Naive thymus-derived CD4-positive, alpha-beta T cell (primary cell): ENCODE measurements at regions of chr1 and their contacts with region 1.

Region 1: GRCh38 chr1:173714759-173715537 is at the start of gene KLHL20:
- DNase-seq: peak; percentile 60 to 92 (median 89)
- ATAC-seq: peak; percentile 98
- H3K4me3 ChIP-seq: peak within 1 kb of the TSS; percentile 77
- H3K4me3 Mint-ChIP-seq: peak within 1 kb of the TSS; percentile 90 to 100 (median 96)
- H3K27ac ChIP-seq: peak within 1 kb of the TSS; percentile 78
- H3K27ac Mint-ChIP-seq: peak within 1 kb of the TSS; percentile 89 to 99 (median 94)
- H3K4me1 ChIP-seq: peaks cover 11 to 18% of the 10 kb centered on the region in 2 donors
- H3K4me1 Mint-ChIP-seq: peaks cover 14 to 48% (median 35%) of the 10 kb centered on the region in 7 donors
- H3K27me3 ChIP-seq: no peaks in the 10 kb centered on the region
- H3K27me3 Mint-ChIP-seq: peaks cover 14 to 32% (median 19%) of the 10 kb centered on the region in 5 donors
- total RNA-seq, gene KLHL20: 28.3 to 40.9 (median 32.8) TPM

Region 2: DNA sequence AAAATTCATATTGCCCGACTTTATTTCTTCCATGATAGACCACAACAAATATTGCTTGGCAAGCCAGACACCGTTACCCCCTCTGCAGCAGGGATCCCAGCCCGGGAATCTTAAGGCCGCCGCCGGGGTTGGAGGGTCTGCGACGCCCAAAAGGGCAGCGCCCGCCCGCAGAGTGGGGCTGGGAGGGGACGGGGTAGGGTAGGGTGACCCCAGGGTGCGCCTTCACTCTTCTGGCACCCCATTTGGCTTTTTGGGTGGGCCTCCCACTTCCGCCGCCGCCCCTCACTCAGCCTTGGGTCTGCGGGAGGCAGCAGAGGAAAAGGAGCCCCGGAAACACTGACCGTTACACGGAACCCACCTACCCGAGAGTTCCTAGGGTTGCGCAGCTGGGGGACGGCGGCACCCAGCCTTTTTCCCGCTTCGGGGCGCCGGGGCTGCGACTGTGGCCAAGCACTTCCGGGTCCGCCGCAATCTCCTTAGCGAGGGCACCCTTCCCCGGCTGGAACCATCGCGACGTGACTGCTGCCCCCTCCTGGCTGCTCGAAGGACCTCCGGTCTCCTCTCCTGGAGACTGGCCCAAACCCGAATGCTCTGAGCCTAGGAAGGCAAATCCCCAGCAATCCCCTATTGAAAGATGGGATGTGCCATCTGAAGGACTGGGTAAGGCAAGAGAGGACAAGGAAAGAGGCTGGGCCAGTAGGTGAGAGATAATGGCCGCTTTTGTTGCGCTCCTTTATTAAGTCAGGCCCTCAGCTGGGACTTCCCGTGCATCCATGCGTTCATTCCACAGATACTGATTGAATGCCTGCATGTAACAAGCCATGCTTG is 1271.1 kb before region 1 on chr1 and contains the start of gene PIGC:
- CTCF ChIA-PET with region 1: no interaction called
- POLR2A ChIA-PET with region 1: no interaction called
- intact Hi-C with region 1: loop called in 1 of 2 experiments (anchors 10 kb)
- DNase-seq: peak; percentile 78 to 89 (median 87)
- ATAC-seq: peak; percentile 100
- H3K4me3 ChIP-seq: peak within 1 kb of the TSS; percentile 72
- H3K4me3 Mint-ChIP-seq: peak within 1 kb of the TSS; percentile 87 to 98 (median 94)
- H3K27ac ChIP-seq: peak within 1 kb of the TSS; percentile 83
- H3K27ac Mint-ChIP-seq: peak within 1 kb of the TSS; percentile 91 to 97 (median 93)
- H3K4me1 ChIP-seq: peaks cover 15 to 25% of the 10 kb centered on the region in 2 donors
- H3K4me1 Mint-ChIP-seq: peaks cover 27 to 53% (median 47%) of the 10 kb centered on the region in 7 donors
- H3K27me3 ChIP-seq: no peaks in the 10 kb centered on the region
- H3K27me3 Mint-ChIP-seq: no peaks in the 10 kb centered on the region
- total RNA-seq, gene PIGC: 21.1 to 57.4 (median 25.1) TPM

Region 3: DNA sequence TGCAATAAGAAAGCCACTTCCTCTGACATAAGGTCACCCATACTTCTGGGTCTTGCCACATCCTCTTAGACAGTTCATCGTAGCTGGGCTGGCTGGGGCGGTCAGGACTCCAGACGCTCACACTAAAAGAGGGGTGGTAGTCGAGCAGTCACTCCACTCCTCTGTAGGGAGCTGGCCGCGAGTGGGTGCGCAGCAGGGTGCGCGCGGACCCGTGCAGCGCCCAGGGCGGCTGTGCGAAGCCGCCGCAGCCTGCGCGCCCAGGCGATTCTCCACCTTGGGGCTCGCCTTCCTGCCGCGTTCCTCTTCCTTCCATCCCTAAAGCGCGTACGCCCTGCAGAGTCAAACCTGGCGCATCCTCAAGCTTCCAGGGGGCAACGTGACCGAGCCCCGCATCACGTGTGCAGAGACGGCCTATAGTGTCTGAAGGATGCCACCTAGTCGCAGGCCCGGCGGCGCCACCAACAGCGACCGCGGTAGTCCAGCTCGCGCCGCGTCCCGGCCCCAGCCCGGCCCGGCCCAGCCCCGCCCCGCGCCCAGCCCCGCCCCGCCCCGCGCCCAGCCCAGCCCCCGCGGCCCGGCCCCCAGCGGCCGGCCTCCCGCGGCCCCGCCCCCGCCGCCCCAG is 238.2 kb before region 1 on chr1:
- CTCF ChIA-PET with region 1: interaction called, 3 read pairs
- POLR2A ChIA-PET with region 1: interaction called, 34 read pairs
- intact Hi-C with region 1: loop called (anchors 1 kb)
- DNase-seq: peak; percentile 65 to 82 (median 78)
- ATAC-seq: peak; percentile 87
- H3K4me3 ChIP-seq: peak overlapping the region; percentile 92
- H3K4me3 Mint-ChIP-seq: peak overlapping the region; percentile 82 to 94 (median 91)
- H3K27ac ChIP-seq: peak overlapping the region; percentile 78
- H3K27ac Mint-ChIP-seq: peak overlapping the region; percentile 61 to 96 (median 89)
- H3K4me1 ChIP-seq: peaks cover 20 to 31% of the 10 kb centered on the region in 2 donors
- H3K4me1 Mint-ChIP-seq: peaks cover 38 to 72% (median 63%) of the 10 kb centered on the region in 7 donors
- H3K27me3 ChIP-seq: no peaks in the 10 kb centered on the region
- H3K27me3 Mint-ChIP-seq: no peaks in the 10 kb centered on the region

Region 4: GRCh38 chr1:173771560-173771959 is 56.6 kb after region 1 on chr1:
- CTCF ChIA-PET with region 1: no interaction called
- POLR2A ChIA-PET with region 1: no interaction called
- intact Hi-C with region 1: loop called in 1 of 2 experiments (anchors 5 kb)
- DNase-seq: no peak
- ATAC-seq: no peak
- H3K4me3 ChIP-seq: no peak overlapping the region
- H3K4me3 Mint-ChIP-seq: no peak overlapping the region
- H3K27ac ChIP-seq: no peak overlapping the region
- H3K27ac Mint-ChIP-seq: peak overlapping the region in 5 of 9 donors; percentile 0 to 69 (median 32)
- H3K4me1 ChIP-seq: no peaks in the 10 kb centered on the region
- H3K4me1 Mint-ChIP-seq: peaks cover 0 to 13% (median 6%) of the 10 kb centered on the region in 7 donors
- H3K27me3 ChIP-seq: no peaks in the 10 kb centered on the region
- H3K27me3 Mint-ChIP-seq: no peaks in the 10 kb centered on the region

Region 5: DNA sequence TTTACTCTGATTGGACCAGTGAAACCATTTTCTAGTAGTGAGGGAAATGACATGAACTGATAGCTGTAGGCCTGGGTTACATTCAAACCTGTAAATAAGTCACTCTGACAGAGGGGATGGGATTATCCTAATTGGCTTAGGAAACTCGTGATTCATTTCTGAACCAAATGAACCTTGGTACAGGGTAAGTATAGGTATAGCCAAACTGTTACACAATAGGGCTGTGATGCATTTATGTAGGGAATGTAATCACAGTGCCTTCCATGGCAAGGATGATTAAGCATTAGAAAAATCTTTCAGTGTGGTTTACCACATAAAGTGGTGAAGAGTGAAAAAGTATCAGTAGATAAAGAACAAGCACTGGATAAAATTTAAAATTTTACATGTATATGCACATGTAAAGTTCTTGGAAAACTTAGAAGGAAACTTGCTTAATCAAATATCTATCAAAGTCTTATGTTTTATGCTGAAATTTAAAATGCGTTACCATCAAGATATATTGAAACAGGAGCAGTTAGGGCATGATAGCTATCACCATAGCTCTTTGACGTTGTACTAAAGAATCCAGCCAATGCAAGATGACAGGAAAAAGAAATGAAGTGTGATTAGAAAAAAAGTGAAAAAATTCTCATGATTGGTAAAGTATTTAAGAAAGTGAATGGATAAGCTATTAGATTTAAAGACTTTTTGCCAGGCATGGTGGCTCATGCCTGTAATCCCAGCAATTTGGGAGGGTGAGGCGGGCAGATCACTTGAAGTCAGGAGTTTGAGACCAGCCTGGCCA is 507.4 kb after region 1 on chr1:
- CTCF ChIA-PET with region 1: no interaction called
- POLR2A ChIA-PET with region 1: no interaction called
- intact Hi-C with region 1: no loop called
- DNase-seq: no peak
- ATAC-seq: no peak
- H3K4me3 ChIP-seq: no peak overlapping the region
- H3K4me3 Mint-ChIP-seq: no peak overlapping the region
- H3K27ac ChIP-seq: no peak overlapping the region
- H3K27ac Mint-ChIP-seq: no peak overlapping the region
- H3K4me1 ChIP-seq: peaks cover 0 to 3% of the 10 kb centered on the region in 2 donors
- H3K4me1 Mint-ChIP-seq: peaks cover 0 to 10% (median 5%) of the 10 kb centered on the region in 7 donors
- H3K27me3 ChIP-seq: no peaks in the 10 kb centered on the region
- H3K27me3 Mint-ChIP-seq: no peaks in the 10 kb centered on the region